Gastrocnemius medialis (tissue), 4 donors: ENCODE measurements at regions of chr17 and their contacts with region 1.

Region 1: GRCh38 chr17:50904521-50905459 is 38.6 kb upstream of the TOB1 start:
- DNase-seq: peak; percentile 9 to 46
- ATAC-seq: peak; percentile 54 to 59
- H3K4me3 ChIP-seq: peak overlapping the region in 3 of 4 donors; percentile 13 to 36 (median 22)
- H3K27ac ChIP-seq: peak overlapping the region; percentile 90 to 98 (median 94)
- H3K4me1 ChIP-seq: peaks cover 30 to 35% of the 10 kb centered on the region in 2 donors
- H3K27me3 ChIP-seq: no peaks in the 10 kb centered on the region
- CTCF ChIP-seq: no peak
- POLR2A ChIP-seq: peak in 1 of 2 donors; percentile 14

Region 2: DNA sequence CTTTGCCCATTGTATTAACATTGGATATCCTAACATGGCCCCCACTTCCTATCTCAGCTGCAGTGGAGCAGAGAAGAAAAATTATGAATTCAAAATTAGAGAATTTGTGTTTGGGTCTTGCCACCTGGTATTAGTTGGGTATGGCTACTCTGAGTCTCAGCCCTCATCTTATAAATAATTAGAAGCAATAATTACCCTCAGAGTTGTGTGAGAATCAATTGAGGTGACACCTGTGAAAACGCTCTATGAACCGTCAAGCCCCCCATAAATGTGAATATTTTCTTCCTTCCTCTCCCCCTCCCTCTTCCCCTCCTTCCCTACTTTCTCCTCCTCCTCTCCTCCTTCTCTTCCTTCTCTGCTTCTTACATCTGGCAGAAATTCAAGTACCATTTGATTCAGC is 29.7 kb before region 1 on chr17:
- in situ Hi-C with region 1: no loop called
- intact Hi-C with region 1: loop called (anchors 2 kb)
- DNase-seq: no peak
- ATAC-seq: no peak
- H3K4me3 ChIP-seq: no peak overlapping the region
- H3K27ac ChIP-seq: no peak overlapping the region
- H3K4me1 ChIP-seq: peaks cover 19 to 20% of the 10 kb centered on the region in 2 donors
- H3K27me3 ChIP-seq: no peaks in the 10 kb centered on the region
- CTCF ChIP-seq: no peak
- POLR2A ChIP-seq: no peak

Region 3: DNA sequence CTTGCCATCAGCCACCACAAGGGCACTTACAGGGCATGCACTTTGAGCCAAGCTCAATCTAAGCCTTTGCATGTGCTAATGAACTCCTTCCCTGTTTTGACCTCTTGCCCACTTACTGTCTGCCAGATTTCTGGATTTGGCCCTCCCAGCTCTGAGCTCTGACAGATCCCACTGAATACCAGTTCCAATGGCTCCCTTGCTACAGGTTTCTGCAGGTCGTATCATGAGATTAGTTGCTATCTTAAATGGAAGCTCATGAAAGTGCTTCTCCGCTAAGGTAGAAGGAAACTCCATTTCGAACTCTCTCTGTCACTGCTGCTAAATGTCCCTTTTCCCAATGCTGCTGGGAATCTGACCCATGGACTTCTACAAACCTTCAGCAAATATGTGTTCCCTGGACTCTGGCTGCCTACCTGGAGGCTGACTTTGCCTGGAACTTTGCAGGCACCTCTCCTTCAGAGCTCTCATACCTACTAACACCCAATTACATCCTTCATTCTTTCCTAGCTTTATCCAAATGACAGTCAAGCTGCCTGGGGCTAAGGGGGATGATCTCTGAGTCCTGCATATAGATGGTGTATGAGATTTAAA is 15.2 kb before region 1 on chr17:
- in situ Hi-C with region 1: no loop called
- intact Hi-C with region 1: no loop called
- DNase-seq: no peak
- ATAC-seq: no peak
- H3K4me3 ChIP-seq: no peak overlapping the region
- H3K27ac ChIP-seq: peak overlapping the region in 2 of 4 donors; percentile 13 to 24
- H3K4me1 ChIP-seq: no peaks in the 10 kb centered on the region
- H3K27me3 ChIP-seq: no peaks in the 10 kb centered on the region
- CTCF ChIP-seq: no peak
- POLR2A ChIP-seq: no peak